ENCODE measurements at regions of chr1 and their contacts with region 1.

Region 1: DNA sequence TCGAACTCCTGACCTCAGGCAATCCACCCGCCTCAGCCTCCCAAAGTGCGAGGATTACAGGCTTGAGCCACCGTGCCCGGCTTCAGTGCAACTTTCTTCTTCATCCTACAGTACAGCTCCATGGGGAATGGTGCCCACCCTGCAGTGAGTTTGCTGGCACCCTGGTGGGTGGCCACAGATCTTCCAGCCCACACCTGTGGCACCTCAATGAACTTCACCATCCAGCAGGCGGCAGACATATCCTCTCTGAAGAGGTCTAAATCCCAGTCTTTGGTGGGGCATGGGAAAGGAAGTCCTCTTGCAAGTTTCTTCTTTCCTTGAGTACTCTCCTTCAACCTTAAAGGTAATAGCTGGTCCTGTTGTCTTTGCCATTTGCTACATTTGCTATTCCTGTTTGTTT is 18.1 kb upstream of the ZBTB8A start:
- DNase-seq: no peak
- ATAC-seq: no peak
- H3K4me3 ChIP-seq: no peak overlapping the region
- H3K4me3 Mint-ChIP-seq: peak overlapping the region; percentile 67
- H3K27ac ChIP-seq: no peak overlapping the region
- H3K27ac Mint-ChIP-seq: no peak overlapping the region
- H3K4me1 ChIP-seq: peaks cover 0 to 7% of the 10 kb centered on the region in 2 donors
- H3K4me1 Mint-ChIP-seq: peaks cover 3% of the 10 kb centered on the region
- H3K27me3 ChIP-seq: no peaks in the 10 kb centered on the region
- H3K27me3 Mint-ChIP-seq: no peaks in the 10 kb centered on the region
- CTCF ChIP-seq: no peak

Region 2: DNA sequence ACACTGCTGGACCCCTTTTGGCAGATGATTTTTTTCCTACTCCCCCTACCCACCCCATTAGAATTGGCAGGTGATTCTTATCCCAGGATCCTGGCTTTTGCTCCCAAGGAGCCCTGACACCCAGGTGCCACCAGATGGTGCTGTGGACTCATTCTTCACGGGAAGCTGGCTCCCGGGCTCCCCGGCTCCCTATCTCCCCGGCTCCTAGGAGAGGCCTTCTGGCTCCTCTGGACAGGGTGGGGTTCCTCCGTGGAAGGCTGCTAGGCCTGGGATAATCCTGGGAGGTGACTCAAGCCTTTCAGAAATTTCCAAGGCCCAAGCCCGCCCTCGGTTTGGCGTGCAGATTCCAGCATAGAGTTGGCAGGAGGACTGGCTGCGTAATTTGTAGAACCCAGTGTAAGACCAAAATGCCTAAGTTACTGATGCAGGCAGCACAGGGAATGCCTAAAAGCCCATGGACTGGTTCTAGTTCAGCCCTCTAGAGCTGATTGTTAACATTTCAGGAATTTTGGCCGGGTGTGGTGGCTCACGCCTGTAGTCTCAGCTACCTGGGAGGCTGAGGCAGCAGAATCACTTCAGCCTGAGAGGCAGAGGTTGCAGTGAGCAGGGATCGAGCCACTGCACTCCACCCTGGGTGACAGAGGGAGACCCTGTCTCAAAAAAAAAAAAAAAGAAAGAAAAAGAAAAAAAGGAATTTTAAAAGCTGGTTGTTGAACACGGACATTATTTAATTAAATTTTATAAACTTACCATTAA is 120.1 kb before region 1 on chr1:
- CTCF ChIA-PET with region 1: interaction called, 11 read pairs
- POLR2A ChIA-PET with region 1: no interaction called
- intact Hi-C with region 1: no loop called
- DNase-seq: peak; percentile 64
- ATAC-seq: peak; percentile 69
- H3K4me3 ChIP-seq: no peak overlapping the region
- H3K4me3 Mint-ChIP-seq: peak overlapping the region; percentile 13
- H3K27ac ChIP-seq: no peak overlapping the region
- H3K27ac Mint-ChIP-seq: no peak overlapping the region
- H3K4me1 ChIP-seq: peaks cover 0 to 3% of the 10 kb centered on the region in 2 donors
- H3K4me1 Mint-ChIP-seq: peaks cover 2% of the 10 kb centered on the region
- H3K27me3 ChIP-seq: no peaks in the 10 kb centered on the region
- H3K27me3 Mint-ChIP-seq: peaks cover 3% of the 10 kb centered on the region
- CTCF ChIP-seq: peak; percentile 79

Region 3: DNA sequence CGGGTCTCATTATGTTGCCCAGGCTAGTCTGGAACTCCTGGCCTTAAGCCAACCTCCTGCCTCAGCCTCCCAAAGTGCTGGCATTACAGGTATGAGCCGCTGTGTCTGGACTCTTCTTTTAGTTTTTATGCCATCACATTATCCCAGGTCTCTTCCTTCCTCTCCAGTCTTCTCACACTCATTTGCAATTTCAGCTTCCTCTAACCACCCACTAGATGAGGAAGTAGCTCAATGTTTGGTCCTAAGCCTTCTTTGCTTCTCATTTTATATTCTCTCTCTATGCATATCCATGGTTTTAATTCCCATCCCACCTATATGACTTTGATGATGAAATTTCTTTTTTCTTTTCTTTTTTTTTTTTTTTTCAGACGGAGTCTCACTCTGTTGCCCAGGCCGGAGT is 15.0 kb after region 1 on chr1:
- CTCF ChIA-PET with region 1: interaction called, 12 read pairs
- POLR2A ChIA-PET with region 1: no interaction called
- intact Hi-C with region 1: no loop called
- DNase-seq: peak; percentile 21
- ATAC-seq: no peak
- H3K4me3 ChIP-seq: no peak overlapping the region
- H3K4me3 Mint-ChIP-seq: no peak overlapping the region
- H3K27ac ChIP-seq: no peak overlapping the region
- H3K27ac Mint-ChIP-seq: no peak overlapping the region
- H3K4me1 ChIP-seq: peaks cover 10 to 16% of the 10 kb centered on the region in 2 donors
- H3K4me1 Mint-ChIP-seq: peaks cover 20% of the 10 kb centered on the region
- H3K27me3 ChIP-seq: peaks cover 0 to 29% (median 24%) of the 10 kb centered on the region in 4 experiments
- H3K27me3 Mint-ChIP-seq: peaks cover 37% of the 10 kb centered on the region
- CTCF ChIP-seq: no peak

Region 4: GRCh38 chr1:32650752-32651460 is 129.7 kb after region 1 on chr1 and contains the start of gene RBBP4:
- CTCF ChIA-PET with region 1: interaction called, 4 read pairs
- POLR2A ChIA-PET with region 1: no interaction called
- intact Hi-C with region 1: loop called (anchors 5 kb)
- DNase-seq: peak; percentile 99
- ATAC-seq: peak; percentile 83
- H3K4me3 ChIP-seq: peak within 1 kb of the TSS; percentile 77 to 96 (median 81)
- H3K4me3 Mint-ChIP-seq: peak within 1 kb of the TSS; percentile 98
- H3K27ac ChIP-seq: peak within 1 kb of the TSS; percentile 97 to 100
- H3K27ac Mint-ChIP-seq: peak within 1 kb of the TSS; percentile 100
- H3K4me1 ChIP-seq: peaks cover 21 to 31% of the 10 kb centered on the region in 2 donors
- H3K4me1 Mint-ChIP-seq: peaks cover 55% of the 10 kb centered on the region
- H3K27me3 ChIP-seq: no peaks in the 10 kb centered on the region
- H3K27me3 Mint-ChIP-seq: no peaks in the 10 kb centered on the region
- CTCF ChIP-seq: no peak
- total RNA-seq, gene RBBP4: 192 and 204 TPM in 2 replicates

Region 5: DNA sequence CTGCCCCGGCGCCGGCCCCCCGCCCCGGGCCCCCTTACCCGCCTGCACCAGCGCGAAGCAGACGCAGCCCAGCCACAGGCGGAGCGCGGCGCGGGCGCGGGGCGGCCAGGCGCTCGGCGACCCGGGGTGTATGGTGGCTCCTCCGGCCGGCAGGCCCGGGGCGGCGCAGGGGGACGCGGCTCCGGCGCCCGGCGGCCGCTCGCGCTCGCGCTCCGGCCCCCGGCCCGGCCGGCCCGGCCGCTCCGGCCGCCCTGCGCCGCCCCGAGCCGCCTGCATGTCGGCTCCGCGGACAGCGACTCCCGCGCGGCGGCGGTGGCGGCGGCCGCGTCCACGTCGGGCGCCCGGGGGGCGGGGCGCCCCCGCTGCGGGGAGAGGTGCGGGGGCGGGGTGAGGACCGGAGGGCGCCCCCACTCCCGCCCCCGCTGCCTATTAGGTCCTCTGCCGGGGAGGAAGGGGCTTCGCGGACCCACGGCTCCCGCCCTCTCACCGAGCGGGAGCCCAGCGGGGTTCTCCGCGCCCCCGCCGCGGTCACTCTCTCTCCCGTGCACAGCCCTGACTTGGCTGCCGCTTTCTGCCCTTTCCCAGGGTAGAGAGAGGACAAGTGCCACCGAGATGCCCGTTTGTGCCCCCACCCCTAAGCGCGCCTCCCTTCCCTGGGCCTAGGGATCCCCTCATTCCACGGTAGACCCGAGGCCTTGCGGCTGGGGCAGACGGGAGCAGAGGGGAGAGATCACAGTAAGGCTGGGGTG is 349.6 kb after region 1 on chr1 and contains the start of gene FNDC5:
- CTCF ChIA-PET with region 1: interaction called, 15 read pairs
- POLR2A ChIA-PET with region 1: no interaction called
- intact Hi-C with region 1: loop called (anchors 1 kb)
- DNase-seq: peak; percentile 37
- ATAC-seq: peak; percentile 14
- H3K4me3 ChIP-seq: peak within 1 kb of the TSS in 4 of 5 experiments; percentile 11 to 44 (median 25)
- H3K4me3 Mint-ChIP-seq: peak within 1 kb of the TSS; percentile 83
- H3K27ac ChIP-seq: no peak within 1 kb of the TSS
- H3K27ac Mint-ChIP-seq: no peak within 1 kb of the TSS
- H3K4me1 ChIP-seq: peaks cover 25 to 29% of the 10 kb centered on the region in 2 donors
- H3K4me1 Mint-ChIP-seq: peaks cover 37% of the 10 kb centered on the region
- H3K27me3 ChIP-seq: peaks cover 0 to 53% (median 19%) of the 10 kb centered on the region in 4 experiments
- H3K27me3 Mint-ChIP-seq: peaks cover 37% of the 10 kb centered on the region
- CTCF ChIP-seq: no peak
- total RNA-seq, gene FNDC5: 0.75 and 0.76 TPM in 2 replicates

Region 6: GRCh38 chr1:33080885-33081553 is 559.9 kb after region 1 on chr1 and contains the start of gene AZIN2:
- CTCF ChIA-PET with region 1: no interaction called
- POLR2A ChIA-PET with region 1: no interaction called
- intact Hi-C with region 1: no loop called
- DNase-seq: peak; percentile 94
- ATAC-seq: peak; percentile 99
- H3K4me3 ChIP-seq: peak within 1 kb of the TSS; percentile 50 to 73 (median 63)
- H3K4me3 Mint-ChIP-seq: peak within 1 kb of the TSS; percentile 85
- H3K27ac ChIP-seq: no peak within 1 kb of the TSS
- H3K27ac Mint-ChIP-seq: peak within 1 kb of the TSS; percentile 47
- H3K4me1 ChIP-seq: peaks cover 14 to 19% of the 10 kb centered on the region in 2 donors
- H3K4me1 Mint-ChIP-seq: peaks cover 21% of the 10 kb centered on the region
- H3K27me3 ChIP-seq: peaks cover 0 to 12% (median 4%) of the 10 kb centered on the region in 4 experiments
- H3K27me3 Mint-ChIP-seq: peaks cover 7% of the 10 kb centered on the region
- CTCF ChIP-seq: no peak
- total RNA-seq, gene AZIN2: 5.4 and 5.9 TPM in 2 replicates

Measured in B cell (primary cell).